Posterior vena cava (tissue), 2 donors: ENCODE measurements at regions of chr20 and their contacts with region 1.

Region 1: DNA sequence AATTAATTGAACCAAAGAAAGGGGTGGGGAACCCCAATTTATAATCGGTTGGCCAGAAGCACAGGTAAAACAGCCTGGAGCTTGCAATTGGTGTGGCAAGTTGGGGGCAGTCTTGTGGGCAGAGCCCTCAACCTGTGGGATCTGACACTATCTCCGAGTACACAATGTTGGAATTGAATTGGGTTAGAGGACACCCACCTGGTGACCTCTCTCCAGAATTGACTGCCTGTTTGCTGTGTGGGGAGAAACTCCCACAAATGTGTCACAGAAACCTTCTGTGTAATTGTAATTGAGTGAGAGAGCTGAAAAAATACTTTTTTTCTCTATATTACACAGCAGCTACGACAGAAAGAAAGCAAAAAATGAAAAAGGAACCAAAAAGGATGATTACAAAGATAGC is 53.0 kb upstream of the FAM83C start:
- DNase-seq: no peak

Region 2: DNA sequence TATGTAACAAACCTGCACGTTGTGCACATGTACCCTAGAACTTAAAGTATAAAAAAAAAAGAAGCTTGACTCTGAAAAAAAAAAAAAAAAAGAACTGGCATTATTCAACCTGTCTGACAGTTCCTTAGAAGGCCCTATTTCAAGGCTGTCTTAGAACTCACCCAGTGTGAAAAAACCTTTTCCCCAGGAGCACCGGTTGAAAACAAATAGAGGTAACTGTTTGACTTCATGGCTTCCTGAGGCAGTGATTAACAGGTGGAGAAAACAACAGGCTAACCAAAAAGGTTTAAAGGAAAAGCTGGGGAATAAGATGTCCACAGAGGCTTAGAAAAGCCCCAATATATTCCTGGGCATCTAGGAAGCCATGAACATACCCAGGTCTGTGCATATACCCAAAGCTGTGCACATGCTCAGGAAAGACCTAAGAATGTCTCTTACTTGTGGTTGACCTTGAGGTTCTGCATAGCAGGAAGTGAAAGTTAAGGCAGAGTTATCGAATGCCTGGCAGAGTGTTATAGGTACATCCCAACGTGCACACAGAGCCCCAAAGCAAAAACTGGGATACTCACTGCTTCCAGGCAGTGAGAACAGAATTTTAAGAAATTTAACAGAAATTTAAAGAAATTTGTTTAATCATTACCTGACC is 59.5 kb after region 1 on chr20:
- intact Hi-C with region 1: no loop called
- DNase-seq: no peak

Region 3: GRCh38 chr20:35837577-35838198 is 492.5 kb after region 1 on chr20:
- intact Hi-C with region 1: loop called in 1 of 2 experiments (anchors 5 kb)
- DNase-seq: no peak